ENCODE measurements at regions of chr5 and their contacts with region 1.

Region 1: GRCh38 chr5:161544350-161544765 is 2.2 kb downstream of the GABRB2 start:
- DNase-seq: no peak
- H3K4me3 ChIP-seq: no peak overlapping the region
- H3K27ac ChIP-seq: no peak overlapping the region
- H3K4me1 ChIP-seq: peaks cover 0 to 35% (median 26%) of the 10 kb centered on the region in 4 donors
- H3K27me3 ChIP-seq: peaks cover 20 to 60% (median 20%) of the 10 kb centered on the region in 3 donors
- CTCF ChIP-seq: peak in 3 of 4 experiments; percentile 29 to 70 (median 56)
- EP300 ChIP-seq: no peak
- POLR2A ChIP-seq: no peak

Region 2: GRCh38 chr5:161358446-161358845 is 185.9 kb before region 1 on chr5:
- intact Hi-C with region 1: no loop called
- DNase-seq: no peak
- H3K4me3 ChIP-seq: no peak overlapping the region
- H3K27ac ChIP-seq: no peak overlapping the region
- H3K4me1 ChIP-seq: no peaks in the 10 kb centered on the region
- H3K27me3 ChIP-seq: no peaks in the 10 kb centered on the region
- CTCF ChIP-seq: no peak
- EP300 ChIP-seq: no peak
- POLR2A ChIP-seq: no peak

Region 3: DNA sequence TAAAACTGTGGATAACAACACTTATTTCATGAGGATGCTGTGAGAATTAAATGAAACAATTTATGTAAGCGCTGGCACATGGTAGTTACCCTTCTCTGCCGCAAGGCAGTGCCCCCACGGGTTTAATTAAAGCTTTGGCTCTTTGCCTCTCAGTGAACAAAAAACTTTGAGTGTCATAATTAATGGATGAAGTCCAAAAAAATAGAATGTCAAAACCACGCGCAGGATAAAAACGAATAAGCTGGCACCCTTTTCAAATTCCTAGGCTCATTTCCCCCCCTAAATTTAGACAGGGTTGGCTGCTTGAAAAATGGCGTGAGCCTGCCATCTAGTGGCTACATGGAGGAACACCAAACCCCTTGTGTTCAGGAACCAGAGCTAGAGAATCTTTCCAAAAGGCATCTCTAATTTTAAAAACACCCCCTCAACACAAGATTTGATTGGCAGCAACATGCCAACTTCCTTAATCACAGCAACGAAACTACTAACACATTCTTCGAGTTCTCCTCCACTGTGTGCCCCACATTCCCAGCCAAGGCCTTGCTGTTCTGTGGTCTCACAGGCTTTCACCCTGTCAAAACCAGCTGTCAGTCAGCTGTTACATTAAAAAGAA is 1864.1 kb after region 1 on chr5:
- intact Hi-C with region 1: loop called (anchors 5 kb)
- DNase-seq: peak; percentile 63
- H3K4me3 ChIP-seq: no peak overlapping the region
- H3K27ac ChIP-seq: no peak overlapping the region
- H3K4me1 ChIP-seq: peaks cover 0 to 5% (median 0%) of the 10 kb centered on the region in 4 donors
- H3K27me3 ChIP-seq: no peaks in the 10 kb centered on the region
- CTCF ChIP-seq: peak; percentile 73 to 88 (median 80)
- EP300 ChIP-seq: no peak
- POLR2A ChIP-seq: no peak